Activated CD4-positive, alpha-beta T cell treated with anti-CD3 and anti-CD28 coated beads for 36 hours (primary cell): ENCODE measurements at regions of chr9 and their contacts with region 1.

Region 1: GRCh38 chr9:109953813-109954497 is 174.0 kb downstream of the PALM2AKAP2 start:
- DNase-seq: no peak
- ATAC-seq: no peak
- H3K4me3 Mint-ChIP-seq: no peak overlapping the region
- H3K27ac Mint-ChIP-seq: no peak overlapping the region
- H3K4me1 Mint-ChIP-seq: peaks cover 44% of the 10 kb centered on the region
- H3K27me3 Mint-ChIP-seq: peaks cover 5% of the 10 kb centered on the region

Region 2: DNA sequence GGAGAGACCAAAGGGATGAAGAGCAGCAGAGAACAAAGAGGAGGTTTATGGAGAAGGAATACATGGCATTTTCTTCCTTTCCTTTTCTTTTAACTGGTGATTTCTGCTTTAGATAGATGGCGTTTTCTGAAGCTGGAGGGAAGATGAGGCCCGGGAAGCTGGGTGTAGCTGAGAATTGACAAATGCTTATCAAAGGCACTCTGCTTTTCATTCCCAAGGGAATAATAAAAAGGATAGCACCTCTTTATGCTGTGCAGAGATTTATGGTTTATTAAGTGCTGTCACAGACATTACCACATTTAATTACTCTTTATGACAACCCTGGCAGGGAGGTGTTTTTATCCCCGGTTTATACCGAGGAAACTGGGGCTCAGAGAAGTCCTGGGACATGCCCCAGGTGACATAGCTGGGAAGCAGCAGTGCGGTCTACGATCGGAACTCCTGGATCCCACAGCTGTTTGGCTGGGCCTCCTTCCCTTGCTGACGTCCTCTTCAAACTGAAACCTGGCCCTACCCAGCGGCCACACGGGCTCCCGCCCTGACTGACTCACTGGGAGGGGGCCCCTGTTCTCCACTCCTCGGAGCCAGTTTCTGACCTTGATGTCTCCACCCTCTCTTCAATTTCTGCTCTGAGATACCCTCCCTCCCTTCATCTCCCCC is 624.8 kb before region 1 on chr9:
- CTCF ChIA-PET with region 1: no interaction called
- POLR2A ChIA-PET with region 1: no interaction called
- intact Hi-C with region 1: no loop called
- DNase-seq: no peak
- ATAC-seq: no peak
- H3K4me3 Mint-ChIP-seq: no peak overlapping the region
- H3K27ac Mint-ChIP-seq: no peak overlapping the region
- H3K4me1 Mint-ChIP-seq: no peaks in the 10 kb centered on the region
- H3K27me3 Mint-ChIP-seq: peaks cover 21% of the 10 kb centered on the region

Region 3: DNA sequence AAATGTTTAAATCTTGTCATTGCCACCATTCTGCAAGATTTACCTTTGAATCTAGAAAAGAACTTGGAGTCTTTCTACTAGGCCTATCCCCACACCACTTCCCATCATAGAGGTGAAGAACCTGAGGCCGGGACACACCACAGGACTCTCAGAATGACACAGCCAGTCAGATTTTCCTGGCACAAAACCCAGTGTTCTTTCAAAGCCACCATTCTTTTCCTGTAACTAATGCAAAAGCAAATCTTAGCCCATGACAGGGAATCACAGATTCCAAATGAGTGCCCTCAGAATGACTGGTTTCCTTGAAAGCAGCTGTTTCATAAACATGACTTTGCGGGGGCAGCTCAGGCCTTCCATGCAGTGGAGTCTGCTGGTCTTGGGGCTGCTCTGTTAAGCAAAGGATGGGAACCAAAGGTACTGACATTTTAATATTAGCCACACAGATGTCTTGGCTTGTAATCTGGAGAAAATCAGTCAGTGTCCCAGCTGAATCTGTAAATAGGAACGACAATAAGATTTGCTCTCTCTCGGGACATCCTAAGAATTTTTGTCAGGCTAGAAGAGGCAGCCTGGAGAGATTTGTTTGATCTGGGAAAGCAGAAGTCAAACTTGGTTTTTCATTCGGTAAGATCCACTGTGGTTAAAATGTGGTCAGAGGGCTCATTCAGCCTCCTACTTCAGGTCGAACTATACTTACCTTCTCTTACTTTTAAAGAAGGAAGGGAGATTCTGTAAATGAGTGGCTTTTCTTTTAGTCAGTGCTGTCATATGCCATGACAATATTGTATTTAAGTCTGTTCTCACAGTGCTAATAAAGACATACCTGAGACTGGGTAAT is 58.8 kb before region 1 on chr9:
- CTCF ChIA-PET with region 1: interaction called, 3 read pairs
- POLR2A ChIA-PET with region 1: no interaction called
- intact Hi-C with region 1: loop called in 1 of 2 experiments (anchors 2 kb)
- DNase-seq: peak; percentile 80
- ATAC-seq: peak; percentile 75
- H3K4me3 Mint-ChIP-seq: peak overlapping the region; percentile 36
- H3K27ac Mint-ChIP-seq: peak overlapping the region; percentile 87
- H3K4me1 Mint-ChIP-seq: peaks cover 30% of the 10 kb centered on the region
- H3K27me3 Mint-ChIP-seq: peaks cover 6% of the 10 kb centered on the region

Region 4: DNA sequence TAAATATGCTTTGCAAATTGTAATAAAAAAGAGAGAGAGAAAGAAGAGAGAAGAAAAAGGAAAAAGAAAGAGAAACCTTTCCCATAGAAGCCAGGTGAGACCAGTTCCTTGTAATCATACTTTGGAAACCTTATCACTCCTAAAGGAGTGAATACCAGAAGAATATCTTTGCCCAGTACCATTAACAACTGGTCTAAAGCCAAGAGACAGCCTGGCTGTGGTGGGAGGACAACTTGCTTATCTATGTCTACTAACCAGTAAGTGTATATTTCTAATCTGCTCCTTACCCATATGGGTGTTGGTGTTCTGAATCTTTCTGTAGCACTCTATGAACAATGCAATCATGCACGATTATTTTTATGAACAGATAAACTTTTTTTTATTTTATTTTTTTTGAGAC is 312.8 kb after region 1 on chr9:
- CTCF ChIA-PET with region 1: no interaction called
- POLR2A ChIA-PET with region 1: no interaction called
- intact Hi-C with region 1: no loop called
- DNase-seq: no peak
- ATAC-seq: no peak
- H3K4me3 Mint-ChIP-seq: no peak overlapping the region
- H3K27ac Mint-ChIP-seq: no peak overlapping the region
- H3K4me1 Mint-ChIP-seq: no peaks in the 10 kb centered on the region
- H3K27me3 Mint-ChIP-seq: no peaks in the 10 kb centered on the region